Activated CD4-positive, alpha-beta memory T cell treated with anti-CD3 and anti-CD28 coated beads for 36 hours (primary cell): ENCODE measurements at regions of chr10 and their contacts with region 1.

Region 1: DNA sequence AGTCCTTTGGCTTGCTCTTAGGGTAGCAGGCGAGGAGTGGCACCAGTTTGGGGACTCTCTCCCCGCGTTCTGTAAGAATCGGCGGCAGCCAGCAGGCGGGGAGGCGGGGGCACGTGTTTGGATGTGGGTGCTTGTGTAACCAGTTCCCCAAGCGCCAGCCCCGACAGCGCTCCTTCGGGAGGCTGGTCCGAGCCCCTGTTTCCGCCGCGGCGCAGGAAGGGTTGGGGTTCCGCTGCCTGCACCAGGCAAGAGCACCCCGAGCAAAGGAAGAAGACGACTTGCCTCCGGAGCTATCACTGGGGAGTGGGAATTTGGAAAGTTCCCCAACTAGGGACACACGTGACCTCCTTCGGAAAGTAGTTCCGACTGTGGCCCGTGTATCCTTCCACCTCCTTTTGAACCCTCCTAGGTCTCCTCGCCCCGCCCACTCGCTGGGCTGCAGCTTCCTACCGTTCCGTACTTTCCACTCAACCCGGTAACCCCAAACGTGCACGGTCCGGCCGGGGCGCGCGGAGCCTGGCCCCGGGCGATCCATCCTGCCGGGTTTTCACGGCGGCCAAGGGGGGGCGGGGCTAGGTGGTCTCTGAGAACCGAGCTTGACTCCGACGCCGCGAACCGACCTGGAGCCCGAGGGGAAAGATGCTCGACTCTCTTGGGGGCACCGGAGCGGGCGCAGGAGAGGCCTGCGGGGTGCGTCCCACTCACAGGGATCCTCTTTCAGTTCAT is 1.2 kb downstream of the KLLN start:
- DNase-seq: peak; percentile 96
- H3K4me3 Mint-ChIP-seq: peak overlapping the region; percentile 90
- H3K27ac Mint-ChIP-seq: peak overlapping the region; percentile 94
- H3K4me1 Mint-ChIP-seq: peaks cover 33% of the 10 kb centered on the region
- H3K27me3 Mint-ChIP-seq: no peaks in the 10 kb centered on the region

Region 2: GRCh38 chr10:87817609-87818504 is 44.3 kb before region 1 on chr10 and contains the start of gene ATAD1:
- CTCF ChIA-PET with region 1: interaction called, 13 read pairs
- POLR2A ChIA-PET with region 1: interaction called, 33 read pairs
- intact Hi-C with region 1: loop called (anchors 1 kb)
- DNase-seq: peak; percentile 93
- H3K4me3 Mint-ChIP-seq: peak within 1 kb of the TSS; percentile 97
- H3K27ac Mint-ChIP-seq: peak within 1 kb of the TSS; percentile 98
- H3K4me1 Mint-ChIP-seq: peaks cover 29% of the 10 kb centered on the region
- H3K27me3 Mint-ChIP-seq: no peaks in the 10 kb centered on the region
- total RNA-seq, gene ATAD1: 39.4 to 42.8 TPM

Region 3: GRCh38 chr10:88091490-88092105 is 229.5 kb after region 1 on chr10:
- CTCF ChIA-PET with region 1: interaction called, 8 read pairs
- POLR2A ChIA-PET with region 1: interaction called, 27 read pairs
- intact Hi-C with region 1: loop called (anchors 1 kb)
- DNase-seq: peak; percentile 88
- H3K4me3 Mint-ChIP-seq: no peak overlapping the region
- H3K27ac Mint-ChIP-seq: peak overlapping the region; percentile 36
- H3K4me1 Mint-ChIP-seq: peaks cover 36% of the 10 kb centered on the region
- H3K27me3 Mint-ChIP-seq: peaks cover 17% of the 10 kb centered on the region

Region 4: GRCh38 chr10:88270871-88271713 is 409.0 kb after region 1 on chr10:
- CTCF ChIA-PET with region 1: no interaction called
- POLR2A ChIA-PET with region 1: interaction called, 7 read pairs
- intact Hi-C with region 1: loop called (anchors 1 kb)
- DNase-seq: peak; percentile 70
- H3K4me3 Mint-ChIP-seq: peak overlapping the region; percentile 40
- H3K27ac Mint-ChIP-seq: peak overlapping the region; percentile 90
- H3K4me1 Mint-ChIP-seq: peaks cover 45% of the 10 kb centered on the region
- H3K27me3 Mint-ChIP-seq: peaks cover 1% of the 10 kb centered on the region

Region 5: DNA sequence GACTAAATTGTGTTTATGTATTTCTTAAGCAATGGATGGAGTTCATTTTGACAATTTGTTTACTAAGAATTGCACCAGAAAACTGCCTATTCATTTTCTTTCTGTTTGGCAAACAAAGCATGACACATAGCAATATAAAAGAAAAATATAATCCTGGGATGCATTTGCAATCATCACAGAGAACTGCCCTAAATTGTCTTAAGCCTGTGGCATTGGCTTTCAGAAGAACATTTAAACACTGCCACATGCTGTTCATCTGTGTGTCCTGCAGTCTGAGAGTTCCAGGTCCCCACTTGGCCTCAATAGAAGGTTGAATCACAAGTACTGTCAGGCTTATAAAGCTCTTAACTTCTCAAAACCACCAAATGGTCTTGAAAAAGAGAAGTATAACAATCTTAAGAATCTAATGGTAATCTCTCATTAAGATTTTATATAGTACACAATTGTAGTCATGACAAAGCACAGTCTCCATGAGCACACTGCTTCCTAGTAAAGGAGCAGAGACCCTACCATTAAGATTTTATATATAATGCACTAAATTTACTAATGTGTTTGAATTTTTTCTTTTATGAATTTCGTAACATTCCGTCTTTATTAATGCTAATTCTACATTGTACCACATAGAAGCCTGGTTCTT is 691.1 kb after region 1 on chr10:
- CTCF ChIA-PET with region 1: interaction called, 5 read pairs
- POLR2A ChIA-PET with region 1: no interaction called
- intact Hi-C with region 1: loop called (anchors 2 kb)
- DNase-seq: peak; percentile 49
- H3K4me3 Mint-ChIP-seq: no peak overlapping the region
- H3K27ac Mint-ChIP-seq: no peak overlapping the region
- H3K4me1 Mint-ChIP-seq: no peaks in the 10 kb centered on the region
- H3K27me3 Mint-ChIP-seq: no peaks in the 10 kb centered on the region

Region 6: DNA sequence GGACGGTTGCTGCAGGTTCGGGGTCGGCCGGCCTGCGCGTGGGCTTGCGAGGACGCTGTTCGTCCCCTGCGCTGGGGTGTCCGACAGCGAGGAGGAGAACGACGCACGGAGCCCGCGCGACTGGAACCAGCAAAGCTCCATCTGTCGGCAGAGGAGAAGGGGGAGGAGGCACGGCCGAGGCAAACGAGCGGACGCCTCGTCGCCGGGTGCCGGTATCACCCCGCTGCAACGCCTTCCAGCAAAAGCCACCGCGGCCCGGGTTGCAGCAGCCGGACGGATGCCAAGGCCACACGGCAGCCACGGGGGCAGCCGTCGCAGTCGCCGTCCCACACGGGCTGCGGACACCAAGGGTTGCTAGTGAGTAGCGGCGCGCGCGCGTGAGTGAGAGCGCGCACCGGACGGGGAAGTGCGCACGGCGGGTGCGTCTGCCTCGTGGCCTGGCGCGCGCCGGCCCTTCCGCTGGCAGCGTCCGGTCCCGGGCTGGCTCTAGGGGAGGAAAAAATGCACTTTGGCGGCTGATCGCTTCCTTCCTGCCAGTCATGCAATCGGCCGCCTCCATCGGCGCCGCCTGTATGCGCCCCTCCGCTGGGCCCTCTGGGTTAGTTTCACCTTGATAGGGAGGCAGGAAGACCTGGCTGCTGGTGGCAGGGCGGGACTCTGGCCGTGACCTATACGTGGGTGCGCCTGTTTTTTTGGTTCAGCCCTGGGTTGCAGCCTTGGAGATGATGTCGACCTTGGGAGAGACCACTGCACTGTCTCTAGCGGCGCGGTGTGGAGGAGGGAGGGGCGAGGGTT is 1018.4 kb after region 1 on chr10:
- CTCF ChIA-PET with region 1: no interaction called
- POLR2A ChIA-PET with region 1: no interaction called
- intact Hi-C with region 1: loop called (anchors 1 kb)
- DNase-seq: peak; percentile 86
- H3K4me3 Mint-ChIP-seq: peak overlapping the region; percentile 88
- H3K27ac Mint-ChIP-seq: peak overlapping the region; percentile 95
- H3K4me1 Mint-ChIP-seq: peaks cover 59% of the 10 kb centered on the region
- H3K27me3 Mint-ChIP-seq: no peaks in the 10 kb centered on the region